Activated CD4-positive, alpha-beta T cell treated with anti-CD3 and anti-CD28 coated beads for 36 hours (primary cell): ENCODE measurements at regions of chr19 and their contacts with region 1.

Region 1: GRCh38 chr19:50537762-50538230 is 24.1 kb upstream of the ASPDH start:
- DNase-seq: peak; percentile 88
- ATAC-seq: peak; percentile 88
- H3K4me3 Mint-ChIP-seq: no peak overlapping the region
- H3K27ac Mint-ChIP-seq: no peak overlapping the region
- H3K4me1 Mint-ChIP-seq: no peaks in the 10 kb centered on the region
- H3K27me3 Mint-ChIP-seq: peaks cover 14% of the 10 kb centered on the region

Region 2: GRCh38 chr19:50461066-50461875 is 76.5 kb before region 1 on chr19:
- CTCF ChIA-PET with region 1: no interaction called
- POLR2A ChIA-PET with region 1: no interaction called
- intact Hi-C with region 1: no loop called
- DNase-seq: peak; percentile 79
- ATAC-seq: peak; percentile 70
- H3K4me3 Mint-ChIP-seq: peak overlapping the region; percentile 3
- H3K27ac Mint-ChIP-seq: no peak overlapping the region
- H3K4me1 Mint-ChIP-seq: peaks cover 16% of the 10 kb centered on the region
- H3K27me3 Mint-ChIP-seq: peaks cover 25% of the 10 kb centered on the region

Region 3: GRCh38 chr19:50476224-50476942 is 61.4 kb before region 1 on chr19 and contains the starts of genes EMC10 and GARIN5A:
- CTCF ChIA-PET with region 1: no interaction called
- POLR2A ChIA-PET with region 1: no interaction called
- intact Hi-C with region 1: no loop called
- DNase-seq: peak; percentile 98
- ATAC-seq: peak; percentile 98
- H3K4me3 Mint-ChIP-seq: peak within 1 kb of the TSS; percentile 90
- H3K27ac Mint-ChIP-seq: peak within 1 kb of the TSS; percentile 84
- H3K4me1 Mint-ChIP-seq: peaks cover 18% of the 10 kb centered on the region
- H3K27me3 Mint-ChIP-seq: no peaks in the 10 kb centered on the region
- total RNA-seq, gene EMC10: 33.4 to 34.7 TPM
- total RNA-seq, gene GARIN5A: 0.48 to 0.58 TPM

Region 4: GRCh38 chr19:50556282-50557008 is 18.6 kb after region 1 on chr19:
- CTCF ChIA-PET with region 1: interaction called, 45 read pairs
- POLR2A ChIA-PET with region 1: no interaction called
- intact Hi-C with region 1: loop called in 1 of 2 experiments (anchors 1 kb)
- DNase-seq: peak; percentile 92
- ATAC-seq: peak; percentile 89
- H3K4me3 Mint-ChIP-seq: peak overlapping the region; percentile 68
- H3K27ac Mint-ChIP-seq: peak overlapping the region; percentile 85
- H3K4me1 Mint-ChIP-seq: peaks cover 2% of the 10 kb centered on the region
- H3K27me3 Mint-ChIP-seq: peaks cover 53% of the 10 kb centered on the region

Region 5: GRCh38 chr19:50568321-50569075 is 30.7 kb after region 1 on chr19 and contains the start of gene LRRC4B:
- CTCF ChIA-PET with region 1: no interaction called
- POLR2A ChIA-PET with region 1: no interaction called
- intact Hi-C with region 1: no loop called
- DNase-seq: no peak
- ATAC-seq: no peak
- H3K4me3 Mint-ChIP-seq: no peak within 1 kb of the TSS
- H3K27ac Mint-ChIP-seq: no peak within 1 kb of the TSS
- H3K4me1 Mint-ChIP-seq: peaks cover 20% of the 10 kb centered on the region
- H3K27me3 Mint-ChIP-seq: peaks cover 37% of the 10 kb centered on the region
- total RNA-seq, gene LRRC4B: not detected

Region 6: DNA sequence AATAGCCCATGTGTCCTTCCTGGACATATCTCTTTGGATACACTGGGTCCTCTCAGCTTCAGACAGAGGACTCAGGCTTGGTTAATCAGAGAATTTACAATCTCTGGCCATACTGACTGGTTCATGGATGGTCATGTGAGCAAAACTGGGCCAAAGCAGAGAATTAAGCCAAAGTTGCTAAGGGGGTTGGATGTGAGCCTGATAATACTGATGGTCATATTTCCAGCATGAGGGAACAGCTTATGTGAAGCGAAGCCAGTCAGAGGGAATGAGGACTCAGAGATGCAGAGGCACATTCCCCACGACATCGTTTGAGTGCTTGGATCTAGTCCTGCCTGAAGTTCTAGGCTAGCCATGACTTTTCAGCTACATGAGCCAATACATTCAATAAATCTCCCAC is 52.4 kb after region 1 on chr19:
- CTCF ChIA-PET with region 1: interaction called, 13 read pairs
- POLR2A ChIA-PET with region 1: no interaction called
- intact Hi-C with region 1: no loop called
- DNase-seq: no peak
- ATAC-seq: no peak
- H3K4me3 Mint-ChIP-seq: no peak overlapping the region
- H3K27ac Mint-ChIP-seq: no peak overlapping the region
- H3K4me1 Mint-ChIP-seq: no peaks in the 10 kb centered on the region
- H3K27me3 Mint-ChIP-seq: peaks cover 12% of the 10 kb centered on the region

Region 7: GRCh38 chr19:50607874-50608785 is 70.3 kb after region 1 on chr19:
- CTCF ChIA-PET with region 1: interaction called, 3 read pairs
- POLR2A ChIA-PET with region 1: no interaction called
- intact Hi-C with region 1: loop called in 1 of 2 experiments (anchors 5 kb)
- DNase-seq: peak; percentile 95
- ATAC-seq: peak; percentile 93
- H3K4me3 Mint-ChIP-seq: peak overlapping the region; percentile 5
- H3K27ac Mint-ChIP-seq: no peak overlapping the region
- H3K4me1 Mint-ChIP-seq: peaks cover 13% of the 10 kb centered on the region
- H3K27me3 Mint-ChIP-seq: peaks cover 35% of the 10 kb centered on the region

Region 8: DNA sequence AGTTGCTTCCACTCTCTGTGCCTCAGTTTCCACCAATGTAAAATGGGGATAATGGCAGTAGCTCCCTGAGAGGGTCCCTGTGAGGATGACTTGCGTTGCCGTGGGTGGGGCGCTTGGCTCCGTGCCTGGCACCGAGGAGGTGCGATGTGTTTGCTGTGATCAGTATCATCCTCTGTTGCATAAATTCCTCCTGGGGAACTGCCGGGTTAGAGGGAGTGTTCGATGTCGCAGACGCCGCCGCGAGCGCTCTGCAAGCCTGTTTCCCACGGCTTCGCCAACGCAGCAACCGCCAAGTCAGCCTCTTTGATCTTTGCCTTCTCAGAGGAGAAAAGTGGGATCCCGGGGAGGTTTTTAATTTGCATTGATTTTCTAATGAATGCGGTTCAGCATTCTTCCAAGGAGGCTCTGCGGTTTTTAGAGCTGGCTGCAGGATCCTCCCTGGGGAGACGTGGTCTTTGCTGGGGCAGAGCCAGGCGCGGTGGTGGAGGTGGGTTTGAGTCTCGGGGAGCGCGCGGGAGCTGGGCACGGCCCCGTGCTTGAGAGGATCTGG is 240.0 kb after region 1 on chr19:
- CTCF ChIA-PET with region 1: interaction called, 16 read pairs
- POLR2A ChIA-PET with region 1: no interaction called
- intact Hi-C with region 1: loop called (anchors 1 kb)
- DNase-seq: peak; percentile 49
- ATAC-seq: no peak
- H3K4me3 Mint-ChIP-seq: no peak overlapping the region
- H3K27ac Mint-ChIP-seq: no peak overlapping the region
- H3K4me1 Mint-ChIP-seq: peaks cover 6% of the 10 kb centered on the region
- H3K27me3 Mint-ChIP-seq: peaks cover 59% of the 10 kb centered on the region